SK-N-SH (cell line): ENCODE measurements at regions of chr11 and their contacts with region 1.

Region 1: DNA sequence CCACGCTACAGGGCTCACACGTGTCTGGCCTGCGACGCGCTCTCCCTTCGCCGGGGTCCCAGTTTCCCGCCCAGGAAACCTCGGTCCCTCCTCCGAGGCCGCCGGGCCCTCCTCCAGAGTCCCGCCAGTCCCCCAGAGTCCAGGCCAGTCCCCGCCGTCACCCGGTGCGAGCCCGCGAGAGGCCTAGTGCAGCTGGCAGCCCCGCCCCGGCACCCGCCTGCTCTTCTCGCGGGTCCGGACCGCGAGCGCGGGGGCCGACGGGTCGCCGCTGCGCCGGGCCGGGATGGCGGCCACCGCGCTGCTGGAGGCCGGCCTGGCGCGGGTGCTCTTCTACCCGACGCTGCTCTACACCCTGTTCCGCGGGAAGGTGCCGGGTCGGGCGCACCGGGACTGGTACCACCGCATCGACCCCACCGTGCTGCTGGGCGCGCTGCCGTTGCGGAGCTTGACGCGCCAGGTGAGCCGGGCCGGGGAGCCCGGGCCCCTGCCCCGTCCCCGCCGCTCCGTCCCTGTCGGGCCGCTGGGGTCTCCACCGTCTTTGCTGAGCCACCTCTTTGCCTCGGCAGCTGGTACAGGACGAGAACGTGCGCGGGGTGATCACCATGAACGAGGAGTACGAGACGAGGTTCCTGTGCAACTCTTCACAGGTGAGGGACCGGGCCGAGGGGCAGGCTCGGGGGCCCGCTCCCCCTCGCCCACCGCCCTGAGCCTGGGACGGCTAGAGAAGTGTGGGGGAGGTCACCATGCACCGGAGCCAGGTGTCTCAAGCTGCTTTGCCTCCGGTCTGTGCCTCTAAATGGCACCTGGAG is at the start of gene PTPMT1:
- DNase-seq: peak; percentile 94
- H3K4me3 ChIP-seq: peak within 1 kb of the TSS; percentile 68 to 97
- H3K27ac ChIP-seq: peak within 1 kb of the TSS; percentile 38 to 40; a peak in 3 of 4 replicates
- H3K4me1 ChIP-seq: peaks cover 0 to 3% of the 10 kb centered on the region in 2 experiments; a peak in 3 of 4 replicates
- H3K27me3 ChIP-seq: no peaks in the 10 kb centered on the region
- CTCF ChIP-seq: no peak
- EP300 ChIP-seq: no peak
- RAD21 ChIP-seq: no peak
- polyA plus RNA-seq, gene PTPMT1: 64.4 and 69.0 TPM in 2 replicates

Region 2: GRCh38 chr11:47507565-47508239 is 57.8 kb before region 1 on chr11:
- CTCF ChIA-PET with region 1: no interaction called
- POLR2A ChIA-PET with region 1: no interaction called
- DNase-seq: no peak
- H3K4me3 ChIP-seq: no peak overlapping the region
- H3K27ac ChIP-seq: peak overlapping the region in 1 of 2 experiments; percentile 28; a peak in 2 of 4 replicates
- H3K4me1 ChIP-seq: peaks cover 4 to 27% of the 10 kb centered on the region in 2 experiments
- H3K27me3 ChIP-seq: no peaks in the 10 kb centered on the region
- CTCF ChIP-seq: no peak
- EP300 ChIP-seq: no peak
- RAD21 ChIP-seq: no peak

Region 3: GRCh38 chr11:47578524-47579460 is 13.2 kb after region 1 on chr11 and contains the starts of genes KBTBD4 and NDUFS3:
- CTCF ChIA-PET with region 1: interaction called, 5 read pairs
- POLR2A ChIA-PET with region 1: interaction called, 18 read pairs
- DNase-seq: peak; percentile 94
- H3K4me3 ChIP-seq: peak within 1 kb of the TSS; percentile 90 to 98
- H3K27ac ChIP-seq: peak within 1 kb of the TSS; percentile 69 to 94
- H3K4me1 ChIP-seq: peaks cover 13 to 21% of the 10 kb centered on the region in 2 experiments; a peak in 3 of 4 replicates
- H3K27me3 ChIP-seq: no peaks in the 10 kb centered on the region
- CTCF ChIP-seq: no peak
- EP300 ChIP-seq: no peak; a peak in 1 of 4 replicates
- RAD21 ChIP-seq: no peak
- polyA plus RNA-seq, gene KBTBD4: 16.8 and 24.6 TPM in 2 replicates
- polyA plus RNA-seq, gene NDUFS3: 150 and 163 TPM in 2 replicates